IMR-90 (cell line): ENCODE measurements at regions of chr12 and their contacts with region 1.

Region 1: DNA sequence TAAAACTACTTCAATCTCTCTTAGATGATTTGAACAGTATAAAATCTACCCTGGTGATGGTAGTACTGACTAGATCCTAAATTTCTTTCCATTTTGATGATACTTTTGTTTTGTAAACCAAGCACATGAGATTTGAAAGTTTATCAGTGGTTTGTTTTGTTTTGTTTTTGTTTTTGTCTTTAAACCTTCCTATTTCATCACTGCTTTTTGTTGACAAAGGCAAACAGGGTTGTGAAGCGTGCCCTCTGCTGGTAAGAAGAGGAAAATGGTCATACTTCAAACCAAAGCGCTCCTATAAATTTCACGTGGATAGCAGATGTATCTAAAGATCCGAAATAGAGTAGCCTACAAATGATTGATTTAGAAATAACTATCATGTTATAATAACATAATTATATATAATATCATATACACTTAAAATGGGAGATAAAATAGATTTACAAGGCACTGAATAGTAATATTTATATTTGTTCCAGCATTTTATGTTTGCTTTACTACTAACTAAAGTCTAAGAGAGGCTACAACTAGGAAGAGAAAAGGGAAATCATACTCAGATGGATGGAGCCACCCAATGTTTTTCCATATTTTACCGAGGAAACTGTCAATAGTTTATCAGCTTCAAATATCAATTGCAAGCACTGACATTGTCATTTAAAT is 254.0 kb upstream of the USP15 start:
- DNase-seq: peak; percentile 36
- ATAC-seq: peak; percentile 42; the same call in 1 of the 2 replicates
- H3K4me3 ChIP-seq: no peak overlapping the region
- H3K27ac ChIP-seq: no peak overlapping the region
- H3K4me1 ChIP-seq: no peaks in the 10 kb centered on the region
- H3K27me3 ChIP-seq: no peaks in the 10 kb centered on the region
- CTCF ChIP-seq: peak; percentile 63
- POLR2A ChIP-seq: no peak
- RAD21 ChIP-seq: peak; percentile 45; the same call in 1 of the 2 replicates

Region 2: GRCh38 chr12:60266381-60266852 is 1739.8 kb before region 1 on chr12:
- CTCF ChIA-PET with region 1: no interaction called
- POLR2A ChIA-PET with region 1: no interaction called
- dilution Hi-C with region 1: no loop called
- in situ Hi-C with region 1: no loop called
- intact Hi-C with region 1: loop called (anchors 10 kb)
- DNase-seq: peak; percentile 94
- ATAC-seq: peak; percentile 99
- H3K4me3 ChIP-seq: no peak overlapping the region
- H3K27ac ChIP-seq: no peak overlapping the region
- H3K4me1 ChIP-seq: peaks cover 1% of the 10 kb centered on the region; the same call in 1 of the 2 replicates
- H3K27me3 ChIP-seq: no peaks in the 10 kb centered on the region
- CTCF ChIP-seq: no peak
- POLR2A ChIP-seq: no peak
- RAD21 ChIP-seq: no peak

Region 3: DNA sequence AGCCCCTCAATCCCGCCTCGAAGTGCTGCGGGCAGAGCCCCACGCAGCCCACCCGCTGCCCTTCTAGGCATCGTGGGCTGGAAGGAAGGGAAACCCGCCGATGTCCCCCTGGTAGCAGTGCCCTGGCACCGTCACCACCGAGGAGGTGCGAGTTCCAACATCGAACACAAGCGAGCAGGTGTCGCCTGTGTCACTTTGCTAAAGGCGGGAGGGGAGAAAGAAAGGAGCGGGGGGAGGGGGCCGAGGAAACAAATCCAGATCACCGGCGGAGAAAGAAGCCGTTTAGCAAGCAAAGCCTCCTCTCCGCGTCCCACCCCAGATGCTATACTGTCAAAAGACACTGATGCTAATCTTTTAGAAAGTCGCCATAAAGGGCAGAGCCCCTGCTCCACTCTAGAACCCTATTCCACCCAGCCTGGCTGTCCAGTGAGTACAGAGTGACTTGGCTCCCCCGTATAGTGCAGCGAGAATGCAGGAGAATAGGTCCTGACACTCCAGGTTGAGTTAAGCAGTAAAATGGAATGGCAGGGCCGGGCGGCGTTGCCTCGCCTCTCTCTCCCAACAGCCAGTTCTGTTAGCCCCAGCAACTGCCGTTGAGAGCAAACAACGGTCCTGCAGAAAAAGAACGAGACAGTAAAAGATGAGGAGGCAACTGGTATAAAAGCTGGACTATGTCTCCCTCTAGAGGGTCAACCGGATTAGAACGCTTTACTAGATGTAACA is 186.1 kb after region 1 on chr12:
- CTCF ChIA-PET with region 1: no interaction called
- POLR2A ChIA-PET with region 1: no interaction called
- dilution Hi-C with region 1: no loop called
- in situ Hi-C with region 1: no loop called
- intact Hi-C with region 1: loop called (anchors 5 kb)
- DNase-seq: peak; percentile 82
- ATAC-seq: peak; percentile 96
- H3K4me3 ChIP-seq: peak overlapping the region; percentile 9
- H3K27ac ChIP-seq: no peak overlapping the region
- H3K4me1 ChIP-seq: peaks cover 2% of the 10 kb centered on the region; the same call in 1 of the 2 replicates
- H3K27me3 ChIP-seq: peaks cover 31% of the 10 kb centered on the region
- CTCF ChIP-seq: peak; percentile 86
- POLR2A ChIP-seq: no peak
- RAD21 ChIP-seq: peak; percentile 85